ENCODE measurements at regions of chr10 and their contacts with region 1.

Region 1: GRCh38 chr10:35635576-35635975 is 6.5 kb downstream of the FZD8 start:
- DNase-seq: peak in 1 of 3 donors; percentile 15
- ATAC-seq: peak; percentile 57 to 67
- H3K4me3 ChIP-seq: no peak overlapping the region
- H3K27ac ChIP-seq: no peak overlapping the region
- H3K4me1 ChIP-seq: no peaks in the 10 kb centered on the region
- H3K27me3 ChIP-seq: no peaks in the 10 kb centered on the region

Region 2: DNA sequence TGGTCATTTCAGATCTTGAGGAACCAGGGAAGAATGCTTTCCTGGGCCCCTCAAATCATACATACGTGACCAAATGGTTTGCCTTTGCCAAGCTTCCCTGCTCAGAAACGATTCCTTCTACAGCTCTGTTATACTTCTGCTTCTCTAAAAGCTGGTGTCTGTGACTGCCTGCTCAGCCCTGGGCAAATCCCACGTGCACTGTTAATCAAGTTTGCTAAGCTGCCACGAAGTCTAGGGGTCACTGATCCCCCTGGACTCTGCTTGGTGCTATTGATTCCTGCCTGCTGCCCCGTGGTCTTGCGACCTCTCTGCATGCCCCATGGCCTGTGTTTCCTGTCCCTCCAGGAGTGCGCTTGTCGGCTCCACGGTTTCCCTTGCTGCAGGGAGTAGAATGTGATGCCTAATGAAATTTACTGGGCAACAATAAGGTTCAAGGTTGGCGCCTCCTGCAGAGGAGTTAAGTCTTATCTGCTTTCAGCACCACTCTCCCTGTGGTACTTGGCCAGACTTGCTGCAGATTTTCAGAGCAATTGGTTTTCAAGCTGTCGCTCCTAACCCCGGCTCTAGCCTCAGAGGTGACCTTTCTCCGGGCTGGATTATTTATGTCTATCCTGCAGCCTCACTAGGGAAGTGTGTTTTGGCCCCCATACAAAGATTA is 208.1 kb after region 1 on chr10:
- intact Hi-C with region 1: no loop called
- DNase-seq: peak; percentile 20 to 73 (median 66)
- ATAC-seq: peak; percentile 95 to 96
- H3K4me3 ChIP-seq: no peak overlapping the region
- H3K27ac ChIP-seq: no peak overlapping the region
- H3K4me1 ChIP-seq: peaks cover 7% of the 10 kb centered on the region
- H3K27me3 ChIP-seq: no peaks in the 10 kb centered on the region

Region 3: DNA sequence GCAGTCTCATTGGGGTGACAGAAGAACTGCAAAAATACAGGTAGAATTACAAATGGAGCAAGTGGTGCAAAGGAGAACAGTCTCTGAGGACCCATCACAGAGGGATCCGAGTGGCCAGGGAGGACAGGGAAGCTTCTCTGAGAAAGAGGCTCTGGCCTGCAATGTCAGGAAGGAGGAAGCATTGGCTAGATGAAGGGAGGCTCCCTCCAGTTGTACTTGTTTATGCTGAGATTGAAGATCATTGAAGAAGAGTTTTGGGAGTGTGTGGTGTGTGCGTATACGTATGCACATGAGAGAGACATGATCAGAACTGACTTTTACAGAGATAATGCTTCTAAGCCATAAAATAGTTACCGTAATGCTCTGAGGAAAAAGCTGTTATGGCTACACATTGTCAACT is 281.2 kb after region 1 on chr10:
- intact Hi-C with region 1: loop called in 2 of 4 experiments (anchors 5 kb)
- DNase-seq: no peak
- ATAC-seq: peak; percentile 51 to 67
- H3K4me3 ChIP-seq: no peak overlapping the region
- H3K27ac ChIP-seq: no peak overlapping the region
- H3K4me1 ChIP-seq: no peaks in the 10 kb centered on the region
- H3K27me3 ChIP-seq: no peaks in the 10 kb centered on the region

Region 4: DNA sequence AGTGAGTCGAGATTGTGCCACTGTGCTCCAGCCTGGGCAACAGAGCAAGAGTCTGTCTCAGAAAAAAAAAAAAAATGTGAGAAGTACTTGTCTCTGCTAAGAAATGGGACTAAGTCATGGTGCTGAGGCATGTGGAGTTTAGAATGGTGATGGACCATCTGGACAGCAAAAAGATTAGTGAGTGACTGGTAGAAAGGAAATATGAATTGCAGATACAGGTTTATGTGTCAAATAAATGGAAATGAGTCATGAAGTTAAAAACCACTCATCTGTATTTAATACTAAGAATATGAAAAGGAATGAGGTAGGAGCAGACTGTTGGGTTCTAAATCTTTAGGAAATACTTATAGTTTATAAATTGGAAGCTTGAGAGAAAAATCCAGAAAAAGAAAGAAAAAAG is 864.1 kb after region 1 on chr10:
- intact Hi-C with region 1: loop called in 1 of 4 experiments (anchors 5 kb)
- DNase-seq: no peak
- ATAC-seq: no peak
- H3K4me3 ChIP-seq: no peak overlapping the region
- H3K27ac ChIP-seq: no peak overlapping the region
- H3K4me1 ChIP-seq: no peaks in the 10 kb centered on the region
- H3K27me3 ChIP-seq: no peaks in the 10 kb centered on the region

Region 5: GRCh38 chr10:36779234-36779846 is 1143.8 kb after region 1 on chr10:
- intact Hi-C with region 1: loop called (anchors 2 to 5 kb)
- DNase-seq: no peak
- ATAC-seq: peak; percentile 92 to 96
- H3K4me3 ChIP-seq: no peak overlapping the region
- H3K27ac ChIP-seq: no peak overlapping the region
- H3K4me1 ChIP-seq: no peaks in the 10 kb centered on the region
- H3K27me3 ChIP-seq: no peaks in the 10 kb centered on the region

Region 6: DNA sequence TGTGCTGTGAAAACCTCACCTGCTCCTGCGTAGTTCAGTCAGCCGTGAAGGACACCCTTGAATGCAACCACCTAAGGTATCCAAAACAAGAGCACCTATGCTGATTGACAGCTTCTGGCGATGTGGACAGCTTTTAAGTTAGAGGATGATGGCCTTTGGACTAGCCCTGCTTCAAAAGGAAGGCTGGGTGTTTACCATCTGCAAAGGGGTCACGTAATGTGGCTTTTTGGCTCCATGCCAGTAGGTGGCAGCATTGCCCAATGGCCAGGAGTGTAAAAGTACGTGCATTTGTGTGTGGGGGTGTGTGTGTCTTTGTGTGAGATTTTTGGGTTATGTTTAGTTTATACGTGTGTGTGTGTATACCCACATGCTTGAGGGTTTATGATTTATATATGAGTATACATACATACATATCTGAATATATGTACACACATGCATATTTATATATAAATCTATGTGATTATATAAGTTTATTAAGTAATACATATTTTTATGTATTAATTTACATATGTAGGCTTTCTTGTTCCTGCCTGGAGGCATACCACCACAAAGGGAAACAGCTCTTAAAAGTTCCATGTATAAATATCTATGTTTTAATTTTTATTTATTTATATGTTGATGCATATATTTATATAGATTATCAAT is 1253.5 kb after region 1 on chr10:
- intact Hi-C with region 1: loop called in 2 of 4 experiments (anchors 10 kb)
- DNase-seq: no peak
- ATAC-seq: no peak
- H3K4me3 ChIP-seq: no peak overlapping the region
- H3K27ac ChIP-seq: no peak overlapping the region
- H3K4me1 ChIP-seq: peaks cover 3% of the 10 kb centered on the region
- H3K27me3 ChIP-seq: no peaks in the 10 kb centered on the region